SK-N-SH (cell line): ENCODE measurements at regions of chr16 and their contacts with region 1.

Region 1: GRCh38 chr16:85172455-85173145 is 60.3 kb upstream of the CIBAR2 start:
- DNase-seq: peak; percentile 83
- H3K4me3 ChIP-seq: peak overlapping the region; percentile 52 to 65
- H3K27ac ChIP-seq: peak overlapping the region; percentile 88 to 97
- H3K4me1 ChIP-seq: peaks cover 26 to 73% of the 10 kb centered on the region in 2 experiments
- H3K27me3 ChIP-seq: no peaks in the 10 kb centered on the region
- CTCF ChIP-seq: peak; percentile 53
- EP300 ChIP-seq: no peak
- RAD21 ChIP-seq: peak; percentile 44

Region 2: DNA sequence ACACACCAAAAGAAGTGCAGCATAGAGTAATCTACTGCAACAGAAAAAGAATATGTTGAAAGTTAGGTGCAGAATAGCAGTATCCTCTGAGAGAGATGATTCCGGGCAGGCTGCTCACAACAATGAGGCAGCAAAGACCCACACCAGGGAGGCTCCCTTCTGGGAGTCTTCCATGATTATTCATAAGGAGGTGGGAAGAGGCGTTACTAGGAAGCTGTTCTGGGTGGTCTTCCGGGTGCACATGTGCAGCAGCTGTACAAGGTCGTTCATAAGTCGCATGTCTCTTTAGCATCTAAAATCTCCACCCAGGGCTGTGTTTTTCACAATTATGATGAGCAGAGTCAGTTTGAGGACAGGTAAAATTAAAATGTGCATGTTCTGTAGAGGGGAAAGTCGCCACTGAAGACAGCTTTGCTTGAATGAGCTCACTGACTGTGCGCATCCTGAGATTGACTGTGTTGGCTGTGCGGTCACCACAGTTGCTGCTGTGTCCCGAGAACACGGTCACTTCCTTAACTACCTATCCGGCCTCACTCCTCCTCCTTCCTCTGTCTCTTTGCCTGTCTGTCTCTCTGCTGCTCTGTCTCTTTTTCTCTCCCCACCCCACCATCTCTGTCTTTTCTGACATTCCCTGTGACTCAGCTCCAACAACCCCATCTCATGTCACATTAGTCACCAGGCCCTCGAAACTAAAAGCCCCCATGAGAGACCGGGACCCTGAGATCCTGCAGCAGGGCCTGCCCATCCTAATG is 1490.3 kb before region 1 on chr16:
- CTCF ChIA-PET with region 1: no interaction called
- POLR2A ChIA-PET with region 1: no interaction called
- DNase-seq: no peak
- H3K4me3 ChIP-seq: no peak overlapping the region
- H3K27ac ChIP-seq: no peak overlapping the region
- H3K4me1 ChIP-seq: no peaks in the 10 kb centered on the region
- H3K27me3 ChIP-seq: no peaks in the 10 kb centered on the region
- CTCF ChIP-seq: no peak
- EP300 ChIP-seq: no peak
- RAD21 ChIP-seq: no peak

Region 3: GRCh38 chr16:84970447-84971127 is 202.0 kb before region 1 on chr16:
- CTCF ChIA-PET with region 1: no interaction called
- POLR2A ChIA-PET with region 1: no interaction called
- DNase-seq: peak; percentile 85
- H3K4me3 ChIP-seq: no peak overlapping the region; a peak in 1 of 4 replicates
- H3K27ac ChIP-seq: no peak overlapping the region
- H3K4me1 ChIP-seq: peaks cover 2 to 4% of the 10 kb centered on the region in 2 experiments; a peak in 1 of 4 replicates
- H3K27me3 ChIP-seq: no peaks in the 10 kb centered on the region
- CTCF ChIP-seq: peak; percentile 97
- EP300 ChIP-seq: no peak
- RAD21 ChIP-seq: peak; percentile 90

Region 4: GRCh38 chr16:85137323-85138072 is 35.1 kb before region 1 on chr16:
- CTCF ChIA-PET with region 1: interaction called, 14 read pairs
- POLR2A ChIA-PET with region 1: interaction called, 3 read pairs
- DNase-seq: peak; percentile 96
- H3K4me3 ChIP-seq: peak overlapping the region; percentile 29 to 45
- H3K27ac ChIP-seq: peak overlapping the region; percentile 20 to 86; a peak in 3 of 4 replicates
- H3K4me1 ChIP-seq: peaks cover 0 to 25% of the 10 kb centered on the region in 2 experiments; a peak in 3 of 4 replicates
- H3K27me3 ChIP-seq: no peaks in the 10 kb centered on the region
- CTCF ChIP-seq: no peak
- EP300 ChIP-seq: peak in 1 of 2 experiments; percentile 91; a peak in 2 of 4 replicates
- RAD21 ChIP-seq: no peak

Region 5: DNA sequence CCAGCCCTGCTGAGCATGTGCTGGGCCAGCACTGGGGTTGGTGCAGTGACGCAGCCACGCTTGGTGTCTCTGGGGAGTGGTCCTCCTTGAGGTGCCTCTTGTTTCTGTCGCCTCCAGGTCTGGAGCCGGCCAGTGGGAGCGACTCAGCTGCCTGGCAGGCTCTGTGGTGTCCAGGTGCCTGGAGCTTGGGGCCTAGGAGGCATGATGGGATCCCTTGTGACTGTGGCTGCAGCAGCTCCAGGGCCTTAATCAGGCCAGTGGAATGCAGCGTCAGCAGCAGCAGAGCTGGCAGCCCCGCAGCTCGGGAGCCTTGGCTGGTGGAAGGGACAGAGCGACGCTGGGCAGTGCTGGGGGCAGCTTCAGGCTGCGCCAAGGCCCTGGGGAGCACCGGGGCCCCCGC is 14.4 kb after region 1 on chr16:
- CTCF ChIA-PET with region 1: interaction called, 18 read pairs
- POLR2A ChIA-PET with region 1: interaction called, 5 read pairs
- DNase-seq: no peak
- H3K4me3 ChIP-seq: no peak overlapping the region
- H3K27ac ChIP-seq: peak overlapping the region in 1 of 2 experiments; percentile 64; a peak in 1 of 4 replicates
- H3K4me1 ChIP-seq: peaks cover 0 to 19% of the 10 kb centered on the region in 2 experiments; a peak in 1 of 4 replicates
- H3K27me3 ChIP-seq: no peaks in the 10 kb centered on the region
- CTCF ChIP-seq: no peak
- EP300 ChIP-seq: no peak; a peak in 1 of 4 replicates
- RAD21 ChIP-seq: no peak

Region 6: DNA sequence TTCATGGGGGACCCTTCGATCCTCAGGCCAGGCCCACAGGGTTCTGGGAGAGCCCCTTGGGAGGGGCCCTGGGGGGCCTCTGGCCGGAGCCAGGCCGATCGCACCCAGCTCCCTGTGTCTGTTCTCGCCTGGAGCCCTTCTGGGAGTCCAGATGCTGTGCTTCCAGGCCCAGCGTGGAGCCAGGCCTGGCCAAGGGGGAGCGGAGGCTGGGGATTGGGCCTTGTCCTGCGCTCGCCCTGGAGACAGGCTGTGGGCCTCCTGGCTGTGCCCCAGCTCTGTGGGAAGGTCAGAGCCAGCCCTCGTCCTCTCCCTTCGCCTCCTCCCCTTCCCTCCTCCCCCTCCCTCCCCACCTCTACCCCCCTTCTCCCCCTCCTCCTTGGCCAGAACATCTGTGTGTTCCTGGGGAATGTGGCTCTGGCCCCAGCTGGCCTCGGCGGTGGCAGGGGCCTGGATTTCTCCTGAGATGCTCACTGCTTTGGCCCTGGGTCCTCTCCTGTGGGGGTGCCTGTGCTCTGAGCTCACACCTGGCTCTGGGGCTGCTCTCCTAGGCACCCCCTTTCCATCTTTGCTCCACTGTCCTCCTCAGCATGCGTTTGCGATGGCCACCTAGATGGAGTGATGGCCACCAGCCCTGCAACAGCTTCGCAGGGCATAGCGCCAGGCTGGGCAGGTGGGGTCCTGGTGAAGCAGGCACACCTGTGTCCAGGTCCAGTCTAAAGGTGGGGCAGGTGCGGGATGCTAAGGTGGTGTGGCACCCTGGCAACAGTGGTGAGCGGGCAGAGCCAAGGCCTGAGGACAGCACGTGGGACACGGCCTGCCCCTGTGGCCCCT is 30.2 kb after region 1 on chr16:
- CTCF ChIA-PET with region 1: interaction called, 43 read pairs
- POLR2A ChIA-PET with region 1: interaction called, 4 read pairs
- DNase-seq: peak; percentile 95
- H3K4me3 ChIP-seq: no peak overlapping the region
- H3K27ac ChIP-seq: peak overlapping the region; percentile 60 to 95; a peak in 3 of 4 replicates
- H3K4me1 ChIP-seq: peaks cover 14 to 62% of the 10 kb centered on the region in 2 experiments; a peak in 3 of 4 replicates
- H3K27me3 ChIP-seq: no peaks in the 10 kb centered on the region
- CTCF ChIP-seq: no peak
- EP300 ChIP-seq: peak in 1 of 2 experiments; percentile 73; a peak in 3 of 4 replicates
- RAD21 ChIP-seq: peak; percentile 8; the same call in 1 of the 2 replicates

Region 7: DNA sequence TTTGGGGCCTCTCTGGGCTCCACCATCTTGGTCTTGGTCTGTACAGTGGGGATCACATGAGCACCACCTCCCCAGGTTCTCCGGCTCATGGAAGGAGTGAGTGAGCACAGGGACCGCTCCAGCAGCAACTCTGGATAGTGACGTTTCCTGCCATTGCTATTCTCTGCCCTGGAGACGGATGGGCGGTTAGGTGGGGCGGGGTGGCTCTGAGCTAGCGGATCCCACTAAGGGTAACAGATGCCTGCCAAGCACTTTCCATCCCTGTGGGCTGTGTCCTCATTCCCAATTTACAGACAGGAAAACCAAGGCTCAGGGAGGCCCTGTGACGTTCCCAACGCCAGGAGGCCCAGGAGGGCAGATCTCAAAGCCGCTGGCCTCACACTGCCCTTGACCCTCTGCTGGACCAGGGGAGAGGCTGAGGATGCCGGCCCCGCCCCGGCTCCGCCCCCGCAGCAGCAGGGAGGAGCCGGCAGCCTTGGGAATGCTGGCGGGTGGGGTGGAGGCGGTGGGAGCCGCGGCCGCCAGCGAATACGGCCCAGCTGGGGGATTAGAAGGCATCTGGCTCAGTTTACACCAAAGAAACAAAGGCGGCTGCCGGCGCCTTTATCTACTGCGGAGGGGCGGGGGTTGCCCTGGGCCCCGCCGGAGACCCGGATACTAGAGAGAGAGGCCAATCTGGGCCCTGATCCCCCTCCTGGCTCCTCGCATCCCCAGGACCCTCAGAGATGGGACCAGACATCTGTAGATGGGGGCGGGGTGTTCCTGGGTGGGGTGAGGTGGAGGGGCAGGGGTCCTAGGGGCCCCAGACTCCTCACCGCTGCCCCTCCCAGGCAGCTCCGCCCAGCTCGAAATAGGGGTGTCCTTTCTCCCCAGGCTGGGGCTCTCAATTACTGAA is 62.0 kb after region 1 on chr16:
- CTCF ChIA-PET with region 1: interaction called, 122 read pairs
- POLR2A ChIA-PET with region 1: interaction called, 3 read pairs
- DNase-seq: peak; percentile 96
- H3K4me3 ChIP-seq: peak overlapping the region; percentile 44 to 61
- H3K27ac ChIP-seq: peak overlapping the region; percentile 60 to 90; a peak in 3 of 4 replicates
- H3K4me1 ChIP-seq: peaks cover 21 to 45% of the 10 kb centered on the region in 2 experiments; a peak in 3 of 4 replicates
- H3K27me3 ChIP-seq: no peaks in the 10 kb centered on the region
- CTCF ChIP-seq: no peak
- EP300 ChIP-seq: peak in 1 of 2 experiments; percentile 9; a peak in 1 of 4 replicates
- RAD21 ChIP-seq: no peak; the same call in 1 of the 2 replicates